Dorsolateral prefrontal cortex (tissue), 120 donors: ENCODE measurements at regions of chr3 and their contacts with region 1.

Region 1: DNA sequence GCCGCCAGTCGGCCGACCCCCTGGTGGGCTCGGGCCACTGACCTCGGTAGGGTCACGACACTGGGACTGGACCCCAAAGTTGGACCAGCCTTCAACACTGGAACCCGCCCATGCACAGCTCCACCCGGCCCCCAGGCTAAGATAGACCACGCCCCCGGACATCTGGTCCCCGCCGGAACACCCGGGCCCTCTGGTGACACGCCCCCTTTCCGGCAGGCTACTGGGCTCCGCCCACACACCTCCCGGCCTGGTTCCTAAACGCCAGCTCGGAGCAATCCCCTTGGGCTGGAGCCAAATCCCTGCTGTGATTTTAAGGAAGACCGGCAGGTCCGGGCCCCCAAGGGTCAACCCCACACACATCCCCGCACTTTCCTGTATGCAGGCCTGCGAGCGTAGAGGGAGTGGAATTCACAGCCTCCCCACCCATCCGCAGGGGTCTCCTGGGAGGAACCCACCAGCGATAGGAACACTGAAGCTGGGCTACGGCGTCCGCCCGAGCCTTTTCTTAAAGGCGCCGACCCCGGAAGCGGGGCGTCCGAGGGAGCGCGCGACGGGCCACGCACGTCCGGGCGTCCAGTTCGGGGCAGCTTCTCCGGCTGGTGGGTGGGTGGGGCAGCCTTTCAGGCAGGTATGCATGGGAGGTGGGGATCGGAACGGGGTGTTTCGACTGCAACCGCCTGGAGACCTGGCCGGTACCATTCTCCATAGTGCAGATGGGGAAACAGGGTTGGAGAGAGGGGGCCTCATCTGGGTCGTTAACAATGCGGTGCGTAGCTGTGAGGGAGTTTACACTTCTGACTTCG is at the start of gene HEMK1:
- DNase-seq: peak; percentile 88 to 98 (median 95)
- H3K4me3 ChIP-seq: peak within 1 kb of the TSS; percentile 65 to 98 (median 89)
- H3K27ac ChIP-seq: peak within 1 kb of the TSS in 58 of 59 donors; percentile 6 to 96 (median 88)
- H3K27me3 ChIP-seq: no peaks in the 10 kb centered on the region
- CTCF ChIP-seq: peak in 26 of 56 donors; percentile 2 to 53 (median 18)
- total RNA-seq, gene HEMK1: 8.6 to 22.8 (median 14.2) TPM

Region 2: DNA sequence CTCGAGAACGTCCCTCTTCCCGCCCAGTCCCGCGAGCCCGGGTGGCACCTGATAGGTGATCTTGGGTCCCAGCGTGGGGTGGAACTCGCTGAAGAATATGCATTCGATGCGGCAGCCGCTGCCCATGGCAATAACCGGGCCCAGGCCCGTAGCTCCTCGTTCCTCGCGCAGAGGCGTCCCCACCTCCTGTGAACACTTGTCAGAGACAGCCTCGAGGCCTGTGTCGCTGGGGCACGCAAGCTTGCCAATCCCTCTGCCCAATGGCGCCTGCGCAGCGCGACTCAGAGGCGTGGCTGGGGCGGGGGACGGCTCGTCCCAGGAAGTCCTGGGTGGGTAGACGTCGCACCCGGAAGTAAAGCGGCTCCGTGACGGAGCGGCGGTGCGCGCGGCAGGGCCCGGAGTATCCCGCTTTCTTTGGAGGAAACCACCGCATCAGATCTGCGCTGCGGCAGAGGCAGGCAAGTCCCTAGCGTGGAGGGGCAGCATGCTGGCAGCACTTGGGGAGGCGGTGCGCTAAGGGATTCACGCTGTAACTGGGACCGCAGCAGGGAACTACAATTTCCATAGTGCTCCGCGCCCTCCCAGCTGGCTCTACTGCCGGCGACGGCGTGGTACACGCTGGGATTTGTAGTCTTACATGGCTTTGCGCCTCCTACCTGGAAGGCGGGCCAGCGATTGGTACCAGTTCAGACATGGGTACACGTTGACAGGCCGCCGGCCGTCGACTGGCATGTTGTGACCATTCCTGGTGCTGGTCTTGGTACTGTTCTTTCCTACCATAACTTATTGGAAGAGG is 218.4 kb before region 1 on chr3 and contains the starts of genes CYB561D2 and NPRL2:
- intact Hi-C with region 1: loop called (anchors 5 to 10 kb)
- DNase-seq: peak; percentile 98 to 100 (median 98)
- H3K4me3 ChIP-seq: peak within 1 kb of the TSS; percentile 64 to 100 (median 86)
- H3K27ac ChIP-seq: peak within 1 kb of the TSS; percentile 90 to 100 (median 97)
- H3K27me3 ChIP-seq: no peaks in the 10 kb centered on the region
- CTCF ChIP-seq: peak in 34 of 56 donors; percentile 4 to 56 (median 24)
- total RNA-seq, gene CYB561D2: 7.6 to 20.0 (median 13.4) TPM
- total RNA-seq, gene NPRL2: 24.6 to 51.7 (median 35.3) TPM

Region 3: GRCh38 chr3:50358911-50359759 is 210.0 kb before region 1 on chr3 and contains the start of gene TMEM115:
- intact Hi-C with region 1: loop called (anchors 5 to 10 kb)
- DNase-seq: peak; percentile 97 to 100 (median 99)
- H3K4me3 ChIP-seq: peak within 1 kb of the TSS; percentile 62 to 100 (median 96)
- H3K27ac ChIP-seq: peak within 1 kb of the TSS; percentile 40 to 98 (median 88)
- H3K27me3 ChIP-seq: no peaks in the 10 kb centered on the region
- CTCF ChIP-seq: peak in 28 of 56 donors; percentile 6 to 54 (median 25)
- total RNA-seq, gene TMEM115: 19.2 to 33.5 (median 26.4) TPM

Region 4: DNA sequence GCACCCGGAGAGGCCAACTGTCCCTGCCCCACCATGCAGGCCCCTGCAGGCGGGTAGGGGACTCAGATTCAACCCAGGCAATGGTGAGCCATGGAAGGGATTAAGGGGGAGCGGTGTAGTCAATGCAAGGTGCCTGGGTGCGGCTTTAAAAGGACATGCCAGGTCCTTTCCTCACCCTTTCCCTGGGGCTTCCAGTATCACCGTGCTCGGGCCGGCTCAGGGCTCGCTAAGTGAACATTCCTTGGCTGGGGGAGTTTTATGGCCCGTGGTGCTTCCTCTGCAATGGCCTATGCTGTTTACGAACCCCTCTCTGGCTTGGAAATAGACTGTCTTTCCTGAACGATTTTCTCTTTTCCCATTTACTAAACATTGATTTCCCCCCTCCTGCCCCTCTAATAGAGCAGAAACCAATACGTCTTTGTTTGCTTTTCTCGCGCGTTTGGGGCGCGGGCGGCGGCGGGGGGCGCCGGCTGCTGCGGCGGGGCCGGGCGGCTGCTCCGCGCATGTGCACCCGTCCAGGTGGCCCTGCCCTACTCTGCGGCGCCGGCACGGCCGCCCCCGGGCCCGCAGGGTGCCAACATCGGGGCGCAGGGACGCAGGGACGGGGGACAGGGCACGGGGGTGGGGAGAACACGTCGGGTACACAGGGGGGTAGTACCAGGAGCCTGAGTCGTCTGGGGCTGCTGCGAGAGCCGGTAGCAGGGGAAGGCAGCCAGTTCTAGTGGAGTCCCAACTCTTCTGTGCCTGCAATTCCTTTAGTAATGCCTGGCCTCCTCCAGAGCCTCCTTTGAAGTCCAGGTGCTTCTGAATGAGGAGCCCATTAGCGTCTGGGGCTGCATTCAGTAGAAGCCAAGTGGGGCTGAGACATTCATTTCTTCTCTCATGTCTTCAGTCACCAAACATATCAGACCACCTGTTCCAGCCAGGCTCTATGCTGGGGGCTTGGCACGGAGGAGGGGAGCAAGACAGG is 38.9 kb before region 1 on chr3:
- intact Hi-C with region 1: no loop called
- DNase-seq: no peak
- H3K4me3 ChIP-seq: peak overlapping the region in 15 of 59 donors; percentile 3 to 51 (median 26)
- H3K27ac ChIP-seq: no peak overlapping the region
- H3K27me3 ChIP-seq: peaks cover 0 to 6% (median 0%) of the 10 kb centered on the region in 45 donors
- CTCF ChIP-seq: no peak

Region 5: DNA sequence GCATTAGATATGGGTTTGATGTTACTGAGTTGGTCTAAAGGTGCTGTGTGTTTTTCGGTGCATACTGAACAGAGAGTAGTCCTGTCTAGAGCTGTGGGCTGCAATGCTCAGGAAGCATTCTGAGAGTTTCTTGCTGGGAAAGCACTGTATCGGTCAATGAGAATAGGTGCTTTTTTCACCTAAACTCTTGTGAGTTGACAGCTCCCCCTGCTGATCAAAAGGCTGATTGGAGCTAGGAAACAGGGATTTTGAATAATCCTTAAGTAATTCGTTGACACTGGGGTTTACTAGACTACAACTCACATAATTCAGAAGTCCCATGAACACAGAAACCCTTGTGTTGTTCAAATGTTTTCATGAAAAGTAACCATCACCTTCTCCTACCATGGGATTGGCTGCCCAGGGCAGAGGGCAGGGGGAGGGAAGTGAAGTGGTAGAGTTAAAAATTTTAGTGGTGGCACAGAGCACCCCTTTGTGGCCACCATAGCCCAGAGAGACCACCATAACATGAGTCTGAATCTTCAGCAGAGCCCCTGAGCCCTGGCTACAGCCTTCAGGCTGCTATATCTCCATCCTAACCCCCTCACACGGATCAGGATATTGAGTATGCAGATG is 802.9 kb after region 1 on chr3:
- intact Hi-C with region 1: loop called in 1 of 2 experiments (anchors 5 kb)
- DNase-seq: peak in 4 of 10 donors; percentile 39 to 69 (median 50)
- H3K4me3 ChIP-seq: no peak overlapping the region
- H3K27ac ChIP-seq: no peak overlapping the region
- H3K27me3 ChIP-seq: no peaks in the 10 kb centered on the region
- CTCF ChIP-seq: peak in 55 of 56 donors; percentile 41 to 83 (median 68)

Region 6: DNA sequence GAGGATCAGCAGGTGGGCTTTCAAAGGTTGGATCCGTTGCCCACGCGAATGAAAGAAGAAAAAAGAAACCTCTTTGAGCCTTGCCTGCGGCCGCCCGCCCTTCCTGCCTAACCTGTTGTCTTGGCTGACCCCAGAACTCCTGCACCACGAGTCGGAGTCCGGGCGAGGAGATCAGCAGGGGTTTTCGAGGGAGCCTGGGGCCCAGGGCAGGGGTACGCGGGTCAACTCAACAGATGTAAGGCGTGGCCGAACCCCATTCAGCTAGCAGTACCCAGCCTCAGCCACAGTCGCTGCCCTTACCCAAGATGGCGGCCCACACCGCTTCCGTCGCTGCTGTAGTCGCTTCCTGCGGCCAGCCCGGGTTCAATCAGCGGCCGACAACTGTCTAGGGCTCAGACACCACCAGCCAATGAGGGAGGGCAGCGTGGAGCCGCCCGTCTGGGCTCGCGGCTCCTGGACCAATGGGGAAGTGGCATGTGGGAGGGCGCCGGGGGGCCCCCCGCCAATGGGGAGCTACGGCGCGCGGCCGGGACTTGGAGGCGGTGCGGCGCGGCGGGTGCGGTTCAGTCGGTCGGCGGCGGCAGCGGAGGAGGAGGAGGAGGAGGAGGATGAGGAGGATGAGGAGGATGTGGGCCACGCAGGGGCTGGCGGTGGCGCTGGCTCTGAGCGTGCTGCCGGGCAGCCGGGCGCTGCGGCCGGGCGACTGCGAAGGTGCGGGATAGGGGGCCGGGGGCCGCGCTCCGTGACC is 815.8 kb after region 1 on chr3 and contains the start of gene MANF:
- intact Hi-C with region 1: loop called in 1 of 2 experiments (anchors 5 kb)
- DNase-seq: peak; percentile 92 to 99 (median 98)
- H3K4me3 ChIP-seq: peak within 1 kb of the TSS; percentile 65 to 99 (median 93)
- H3K27ac ChIP-seq: peak within 1 kb of the TSS; percentile 34 to 98 (median 94)
- H3K27me3 ChIP-seq: no peaks in the 10 kb centered on the region
- CTCF ChIP-seq: peak in 35 of 56 donors; percentile 9 to 59 (median 37)
- total RNA-seq, gene MANF: 12.0 to 80.8 (median 29.0) TPM